Body of pancreas (tissue), 4 donors: ENCODE measurements at regions of chr6 and their contacts with region 1.

Region 1: GRCh38 chr6:168370310-168370991 is 50.9 kb upstream of the DACT2 start:
- DNase-seq: peak; percentile 73 to 86 (median 80)
- ATAC-seq: peak; percentile 84
- H3K4me3 ChIP-seq: no peak overlapping the region
- H3K27ac ChIP-seq: no peak overlapping the region
- H3K4me1 ChIP-seq: peaks cover 16% of the 10 kb centered on the region
- H3K27me3 ChIP-seq: no peaks in the 10 kb centered on the region
- CTCF ChIP-seq: peak; percentile 83 to 93 (median 90)
- POLR2A ChIP-seq: no peak

Region 2: DNA sequence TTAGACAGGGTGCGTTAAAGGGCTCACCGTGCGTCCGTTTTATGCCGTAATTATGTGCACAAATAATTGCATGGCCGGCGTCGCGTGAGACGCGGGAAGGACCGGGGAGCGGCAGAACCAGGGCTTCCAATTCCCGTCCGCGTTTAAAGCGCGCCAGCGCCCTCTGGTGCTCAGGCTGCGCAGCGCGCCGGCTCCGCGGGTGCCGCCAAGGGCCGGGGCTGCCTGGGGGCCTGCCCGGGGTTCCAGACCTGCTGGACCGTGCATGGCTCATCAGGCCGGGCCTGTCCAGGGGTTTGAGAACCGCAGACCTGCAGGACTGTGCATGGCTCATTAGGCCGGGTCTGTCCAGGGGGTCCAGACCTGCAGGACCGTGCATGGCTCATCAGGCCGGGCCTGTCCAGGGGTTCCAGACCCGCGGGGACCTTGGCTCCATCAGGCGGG is 514.2 kb after region 1 on chr6:
- intact Hi-C with region 1: loop called (anchors 2 kb)
- DNase-seq: peak; percentile 66 to 74 (median 70)
- ATAC-seq: peak; percentile 57
- H3K4me3 ChIP-seq: no peak overlapping the region
- H3K27ac ChIP-seq: no peak overlapping the region
- H3K4me1 ChIP-seq: peaks cover 18% of the 10 kb centered on the region
- H3K27me3 ChIP-seq: peaks cover 0 to 5% of the 10 kb centered on the region in 2 donors
- CTCF ChIP-seq: peak; percentile 81 to 94 (median 92)
- POLR2A ChIP-seq: no peak

Region 3: DNA sequence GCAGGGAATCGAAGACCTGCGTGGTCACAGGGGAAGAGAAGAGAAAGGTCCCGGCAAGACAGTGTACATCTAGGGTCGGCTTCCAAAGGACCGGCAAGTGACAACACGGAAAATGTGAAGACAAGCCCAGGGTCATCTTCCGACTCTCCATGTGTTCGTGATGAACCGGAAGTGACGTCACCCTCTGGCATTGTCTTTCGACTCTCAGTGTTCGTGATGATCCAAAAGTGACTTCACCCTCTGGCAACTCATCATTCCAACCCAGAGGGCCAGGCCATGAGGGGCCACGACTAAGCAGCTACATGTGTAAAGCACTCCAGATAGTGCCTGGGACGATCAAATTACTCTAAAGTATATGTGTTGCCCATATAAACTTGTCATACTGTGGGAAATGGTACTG is 592.4 kb after region 1 on chr6:
- intact Hi-C with region 1: no loop called
- DNase-seq: no peak
- ATAC-seq: no peak
- H3K4me3 ChIP-seq: no peak overlapping the region
- H3K27ac ChIP-seq: no peak overlapping the region
- H3K4me1 ChIP-seq: no peaks in the 10 kb centered on the region
- H3K27me3 ChIP-seq: no peaks in the 10 kb centered on the region
- CTCF ChIP-seq: no peak
- POLR2A ChIP-seq: no peak